SK-N-SH (cell line): ENCODE measurements at regions of chr4 and their contacts with region 1.

Region 1: DNA sequence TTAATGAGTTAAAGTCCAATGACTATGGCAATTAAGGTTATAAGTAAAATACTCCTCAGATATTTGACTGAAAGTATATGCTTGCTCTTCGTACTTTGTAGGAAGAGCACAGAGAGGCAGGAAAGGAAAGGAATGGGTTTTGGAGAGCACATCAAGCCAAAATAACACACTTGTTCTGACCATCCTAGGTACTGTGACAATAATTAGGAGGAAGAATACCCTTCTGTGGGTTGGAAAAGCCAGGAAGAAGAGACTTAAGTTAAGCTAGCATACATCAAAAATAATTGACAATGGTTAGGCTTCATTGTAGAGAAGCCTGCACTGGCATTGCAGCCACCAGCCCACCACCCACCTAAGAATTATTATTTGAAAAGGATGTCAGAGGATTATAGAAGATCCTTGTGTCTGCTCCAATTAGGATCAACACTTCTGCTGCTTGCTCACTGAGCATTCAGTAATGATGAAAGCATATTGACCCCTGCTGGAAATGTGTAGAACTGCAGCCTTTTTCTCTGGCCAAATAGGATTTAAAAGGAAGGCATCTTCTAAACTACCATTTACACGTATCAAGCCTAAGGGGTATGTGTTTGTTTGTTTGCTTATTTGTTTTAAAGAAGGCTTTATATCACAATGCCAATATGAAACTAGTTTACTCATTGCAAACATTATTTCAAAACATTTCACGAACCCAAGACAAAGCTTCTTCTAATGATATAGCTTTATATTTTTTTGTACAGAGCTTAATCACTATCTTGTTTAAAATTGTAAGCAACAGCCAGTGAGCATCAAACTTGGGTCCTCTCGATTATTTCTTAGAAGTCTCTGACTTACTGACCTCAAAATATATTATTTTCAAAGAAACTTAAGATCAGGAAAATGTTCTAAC is 286.2 kb upstream of the TET2 start:
- DNase-seq: peak; percentile 57
- H3K4me3 ChIP-seq: no peak overlapping the region; a peak in 1 of 4 replicates
- H3K27ac ChIP-seq: no peak overlapping the region
- H3K4me1 ChIP-seq: no peaks in the 10 kb centered on the region
- H3K27me3 ChIP-seq: no peaks in the 10 kb centered on the region; the same call in 1 of the 2 replicates
- CTCF ChIP-seq: peak; percentile 95
- EP300 ChIP-seq: no peak
- RAD21 ChIP-seq: peak; percentile 90

Region 2: GRCh38 chr4:104064646-104065577 is 795.6 kb before region 1 on chr4:
- CTCF ChIA-PET with region 1: interaction called, 33 read pairs
- POLR2A ChIA-PET with region 1: no interaction called
- DNase-seq: peak; percentile 25
- H3K4me3 ChIP-seq: no peak overlapping the region
- H3K27ac ChIP-seq: no peak overlapping the region
- H3K4me1 ChIP-seq: no peaks in the 10 kb centered on the region; a peak in 1 of 4 replicates
- H3K27me3 ChIP-seq: no peaks in the 10 kb centered on the region
- CTCF ChIP-seq: peak; percentile 78
- EP300 ChIP-seq: no peak
- RAD21 ChIP-seq: peak; percentile 73

Region 3: GRCh38 chr4:104870495-104871233 is 10.2 kb after region 1 on chr4:
- CTCF ChIA-PET with region 1: interaction called, 17 read pairs
- POLR2A ChIA-PET with region 1: no interaction called
- DNase-seq: no peak
- H3K4me3 ChIP-seq: no peak overlapping the region
- H3K27ac ChIP-seq: no peak overlapping the region
- H3K4me1 ChIP-seq: no peaks in the 10 kb centered on the region
- H3K27me3 ChIP-seq: no peaks in the 10 kb centered on the region
- CTCF ChIP-seq: no peak
- EP300 ChIP-seq: no peak
- RAD21 ChIP-seq: no peak

Region 4: DNA sequence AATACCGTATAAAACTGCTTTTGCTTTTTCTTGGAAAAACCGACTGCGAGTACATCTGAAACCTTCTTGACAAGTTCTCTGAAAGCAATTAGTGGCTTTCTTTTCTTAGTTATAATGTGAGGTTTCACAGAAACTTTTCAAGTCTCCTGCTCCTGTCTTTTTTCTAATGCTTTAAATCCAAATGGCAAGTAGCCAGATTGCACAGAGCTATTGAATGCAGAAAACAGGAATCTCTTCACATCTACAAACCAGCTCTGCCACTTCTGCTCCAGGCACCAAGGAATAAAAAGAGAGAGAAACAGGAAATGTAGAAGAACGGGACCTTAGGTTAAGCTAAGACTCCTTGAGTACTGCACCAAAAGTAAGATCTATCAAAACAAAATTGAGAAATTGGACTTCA is 18.9 kb after region 1 on chr4:
- CTCF ChIA-PET with region 1: interaction called, 11 read pairs
- POLR2A ChIA-PET with region 1: no interaction called
- DNase-seq: no peak
- H3K4me3 ChIP-seq: no peak overlapping the region
- H3K27ac ChIP-seq: no peak overlapping the region
- H3K4me1 ChIP-seq: no peaks in the 10 kb centered on the region
- H3K27me3 ChIP-seq: no peaks in the 10 kb centered on the region
- CTCF ChIP-seq: no peak
- EP300 ChIP-seq: no peak
- RAD21 ChIP-seq: no peak